CD4-positive, alpha-beta memory T cell (primary cell): ENCODE measurements at regions of chr10 and their contacts with region 1.

Region 1: DNA sequence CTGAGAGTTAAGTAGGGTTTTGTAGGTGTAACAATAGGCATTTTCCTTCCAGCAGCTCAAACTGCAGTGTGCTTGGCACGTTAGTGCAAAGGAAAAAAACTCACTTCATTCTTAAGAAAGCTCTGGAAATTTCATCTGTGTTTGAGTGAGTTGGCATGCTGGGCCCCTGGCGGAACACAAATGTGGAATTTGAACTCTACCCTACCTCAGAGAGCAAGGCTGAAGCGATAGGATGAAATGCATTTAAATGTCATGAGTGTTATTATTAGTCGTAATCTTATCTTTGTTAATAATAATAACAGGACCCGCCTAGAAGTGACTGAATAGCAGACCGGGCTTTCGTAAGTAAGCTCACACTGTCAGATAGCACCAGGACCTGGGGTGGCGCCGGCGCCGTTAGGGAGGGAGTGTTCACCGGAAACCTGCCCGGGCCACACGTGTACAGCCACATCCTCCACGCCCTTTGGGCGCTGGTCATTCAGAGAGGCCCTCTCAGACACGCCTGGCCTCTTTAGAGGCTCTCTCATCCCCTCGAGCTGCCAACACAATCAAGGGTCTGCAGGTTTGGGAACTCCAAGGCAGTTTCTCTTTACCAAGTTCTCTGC is 63.5 kb downstream of the GRK5 start:
- DNase-seq: peak in 3 of 5 donors; percentile 43 to 63 (median 58)
- H3K4me3 ChIP-seq: no peak overlapping the region
- H3K4me3 Mint-ChIP-seq: peak overlapping the region; percentile 45 to 80 (median 66)
- H3K27ac ChIP-seq: peak overlapping the region; percentile 93
- H3K27ac Mint-ChIP-seq: peak overlapping the region; percentile 96 to 100 (median 99)
- H3K4me1 ChIP-seq: peaks cover 69% of the 10 kb centered on the region
- H3K4me1 Mint-ChIP-seq: peaks cover 28 to 84% (median 65%) of the 10 kb centered on the region in 4 donors
- H3K27me3 ChIP-seq: no peaks in the 10 kb centered on the region
- H3K27me3 Mint-ChIP-seq: no peaks in the 10 kb centered on the region

Region 2: GRCh38 chr10:119281581-119282071 is 10.8 kb after region 1 on chr10:
- CTCF ChIA-PET with region 1: interaction called, 10 read pairs
- POLR2A ChIA-PET with region 1: interaction called, 5 read pairs
- intact Hi-C with region 1: no loop called
- DNase-seq: no peak
- H3K4me3 ChIP-seq: no peak overlapping the region
- H3K4me3 Mint-ChIP-seq: peak overlapping the region in 1 of 8 donors; percentile 29
- H3K27ac ChIP-seq: no peak overlapping the region
- H3K27ac Mint-ChIP-seq: peak overlapping the region in 4 of 7 donors; percentile 23 to 57 (median 55)
- H3K4me1 ChIP-seq: peaks cover 61% of the 10 kb centered on the region
- H3K4me1 Mint-ChIP-seq: peaks cover 30 to 84% (median 60%) of the 10 kb centered on the region in 4 donors
- H3K27me3 ChIP-seq: no peaks in the 10 kb centered on the region
- H3K27me3 Mint-ChIP-seq: no peaks in the 10 kb centered on the region

Region 3: GRCh38 chr10:119325131-119325530 is 54.3 kb after region 1 on chr10:
- CTCF ChIA-PET with region 1: no interaction called
- POLR2A ChIA-PET with region 1: no interaction called
- intact Hi-C with region 1: no loop called
- DNase-seq: no peak
- H3K4me3 ChIP-seq: no peak overlapping the region
- H3K4me3 Mint-ChIP-seq: no peak overlapping the region
- H3K27ac ChIP-seq: no peak overlapping the region
- H3K27ac Mint-ChIP-seq: peak overlapping the region in 1 of 7 donors; percentile 40
- H3K4me1 ChIP-seq: no peaks in the 10 kb centered on the region
- H3K4me1 Mint-ChIP-seq: peaks cover 8 to 13% (median 10%) of the 10 kb centered on the region in 4 donors
- H3K27me3 ChIP-seq: no peaks in the 10 kb centered on the region
- H3K27me3 Mint-ChIP-seq: no peaks in the 10 kb centered on the region